ENCODE measurements at regions of chr2 and their contacts with region 1.

Region 1: DNA sequence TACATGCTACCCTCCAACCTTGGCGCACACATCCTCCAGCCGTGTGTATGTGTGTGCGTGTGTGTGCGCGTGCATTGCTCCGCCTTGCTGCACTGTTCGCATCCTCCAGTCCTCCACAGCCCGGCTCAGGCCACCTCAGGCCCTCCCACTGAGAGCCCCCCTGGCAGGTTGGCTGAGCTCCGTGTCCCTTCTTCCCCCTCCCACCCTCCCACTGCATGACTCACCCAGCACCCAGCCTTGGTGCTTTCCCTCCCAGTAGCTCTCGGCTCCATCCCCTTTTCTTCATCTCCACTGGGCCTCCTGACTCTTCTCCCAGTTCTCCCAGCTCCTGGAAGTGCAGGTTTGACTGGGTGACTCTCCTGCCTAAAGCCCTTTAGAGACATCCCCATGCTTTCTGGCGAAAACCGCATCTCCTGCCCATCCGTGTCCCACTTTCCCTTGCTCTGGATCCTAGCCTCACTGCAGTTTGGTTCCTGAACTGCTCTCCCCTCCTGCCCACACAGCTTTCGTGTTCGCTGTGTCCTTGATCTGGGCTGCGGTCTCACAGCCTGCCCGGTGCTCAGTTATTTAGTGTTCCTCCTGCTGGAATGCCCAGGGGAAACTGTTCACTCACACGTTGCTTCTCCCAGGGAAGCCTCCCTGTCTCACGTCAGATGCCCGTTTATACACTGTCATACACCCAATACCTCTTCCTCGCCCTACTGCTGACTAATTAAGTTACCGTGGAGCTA is 4.9 kb downstream of the TMEM177 start:
- DNase-seq: no peak
- H3K4me3 ChIP-seq: no peak overlapping the region
- H3K27ac ChIP-seq: no peak overlapping the region; the same call in 1 of the 2 replicates
- H3K4me1 ChIP-seq: peaks cover 0 to 15% (median 7%) of the 10 kb centered on the region in 4 experiments; a peak in 6 of 7 replicates
- H3K27me3 ChIP-seq: no peaks in the 10 kb centered on the region
- CTCF ChIP-seq: no peak
- EP300 ChIP-seq: no peak
- POLR2A ChIP-seq: no peak
- RAD21 ChIP-seq: no peak

Region 2: GRCh38 chr2:119694845-119695521 is 11.1 kb after region 1 on chr2:
- CTCF ChIA-PET with region 1: interaction called, 7 read pairs
- POLR2A ChIA-PET with region 1: interaction called, 28 read pairs
- DNase-seq: no peak
- H3K4me3 ChIP-seq: no peak overlapping the region
- H3K27ac ChIP-seq: no peak overlapping the region
- H3K4me1 ChIP-seq: peaks cover 14 to 39% (median 16%) of the 10 kb centered on the region in 4 experiments
- H3K27me3 ChIP-seq: no peaks in the 10 kb centered on the region
- CTCF ChIP-seq: no peak
- EP300 ChIP-seq: no peak
- POLR2A ChIP-seq: no peak
- RAD21 ChIP-seq: no peak

Region 3: DNA sequence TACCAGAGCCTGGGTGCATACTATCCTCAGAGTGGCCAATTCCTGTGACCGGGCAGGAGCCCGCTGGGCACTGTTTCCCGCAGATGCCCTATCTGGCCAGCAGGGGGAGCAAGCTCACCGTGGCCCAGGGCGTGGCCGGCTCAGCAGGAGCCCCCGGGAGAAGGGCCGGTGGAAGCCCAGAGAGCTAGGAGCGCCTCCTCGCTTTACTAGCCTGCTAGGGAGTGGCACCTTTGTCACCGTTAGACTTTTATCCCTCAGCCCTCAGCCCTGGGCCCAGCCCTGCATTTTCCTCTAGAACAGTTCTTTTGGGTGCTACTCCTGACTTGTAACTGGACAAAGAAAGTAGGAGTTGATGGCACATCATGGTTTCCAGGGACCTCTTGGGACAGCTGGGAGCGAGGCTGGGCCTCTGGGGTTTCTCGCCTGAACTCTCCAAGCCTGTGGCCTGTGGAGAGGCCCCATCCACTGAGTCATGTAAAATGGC is 19.1 kb after region 1 on chr2:
- CTCF ChIA-PET with region 1: interaction called, 12 read pairs
- POLR2A ChIA-PET with region 1: interaction called, 22 read pairs
- DNase-seq: peak; percentile 44 to 91
- H3K4me3 ChIP-seq: no peak overlapping the region
- H3K27ac ChIP-seq: no peak overlapping the region
- H3K4me1 ChIP-seq: peaks cover 16 to 33% (median 21%) of the 10 kb centered on the region in 4 experiments; a peak in 6 of 7 replicates
- H3K27me3 ChIP-seq: no peaks in the 10 kb centered on the region
- CTCF ChIP-seq: peak; percentile 96 to 98 (median 98)
- EP300 ChIP-seq: peak in 1 of 2 experiments; percentile 51; a peak in 1 of 3 replicates
- POLR2A ChIP-seq: no peak
- RAD21 ChIP-seq: peak; percentile 95

Measured in H1 (cell line).